ENCODE measurements at regions of chr16 and their contacts with region 1.

Region 1: DNA sequence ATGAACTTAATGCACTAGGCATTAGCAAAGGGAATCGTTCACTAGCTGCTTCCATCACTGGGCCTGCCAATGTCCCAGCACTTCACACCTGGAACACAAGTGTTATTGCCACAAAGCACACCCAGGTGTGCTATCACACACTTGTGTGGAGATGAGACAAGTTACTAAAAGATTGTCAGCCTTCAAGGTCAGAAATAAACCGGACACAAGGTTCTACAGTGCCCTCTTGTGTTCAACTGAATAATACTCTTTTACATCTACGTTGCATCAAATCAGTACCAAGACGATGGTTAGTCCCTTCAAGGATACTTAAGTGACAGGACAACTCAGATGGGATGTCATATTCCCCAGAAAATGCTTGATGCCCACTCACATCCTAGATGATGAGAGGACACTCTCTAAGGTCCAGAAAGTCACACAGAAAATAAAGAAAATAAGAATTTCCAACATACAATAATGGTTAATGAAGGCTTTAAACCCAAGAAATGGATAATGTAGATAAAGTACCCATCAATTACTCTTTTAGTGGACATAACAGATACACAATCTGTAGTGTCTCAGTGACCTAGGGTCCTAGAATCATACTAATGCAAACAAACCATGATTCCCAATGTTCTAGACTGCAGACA is 16.4 kb upstream of the GLG1 start:
- DNase-seq: no peak
- H3K4me3 ChIP-seq: no peak overlapping the region
- H3K27ac ChIP-seq: no peak overlapping the region
- H3K4me1 ChIP-seq: peaks cover 0 to under 1% (median 0%) of the 10 kb centered on the region in 3 donors
- H3K27me3 ChIP-seq: no peaks in the 10 kb centered on the region
- CTCF ChIP-seq: peak in 5 of 6 experiments; percentile 31 to 70 (median 55)
- POLR2A ChIP-seq: no peak

Region 2: GRCh38 chr16:74309789-74310781 is 313.2 kb before region 1 on chr16:
- intact Hi-C with region 1: loop called (anchors 10 kb)
- DNase-seq: no peak
- H3K4me3 ChIP-seq: no peak overlapping the region
- H3K27ac ChIP-seq: no peak overlapping the region
- H3K4me1 ChIP-seq: no peaks in the 10 kb centered on the region
- H3K27me3 ChIP-seq: no peaks in the 10 kb centered on the region
- CTCF ChIP-seq: peak in 5 of 6 experiments; percentile 48 to 72 (median 60)
- POLR2A ChIP-seq: no peak